ENCODE measurements at regions of chr14 and their contacts with region 1.

Region 1: DNA sequence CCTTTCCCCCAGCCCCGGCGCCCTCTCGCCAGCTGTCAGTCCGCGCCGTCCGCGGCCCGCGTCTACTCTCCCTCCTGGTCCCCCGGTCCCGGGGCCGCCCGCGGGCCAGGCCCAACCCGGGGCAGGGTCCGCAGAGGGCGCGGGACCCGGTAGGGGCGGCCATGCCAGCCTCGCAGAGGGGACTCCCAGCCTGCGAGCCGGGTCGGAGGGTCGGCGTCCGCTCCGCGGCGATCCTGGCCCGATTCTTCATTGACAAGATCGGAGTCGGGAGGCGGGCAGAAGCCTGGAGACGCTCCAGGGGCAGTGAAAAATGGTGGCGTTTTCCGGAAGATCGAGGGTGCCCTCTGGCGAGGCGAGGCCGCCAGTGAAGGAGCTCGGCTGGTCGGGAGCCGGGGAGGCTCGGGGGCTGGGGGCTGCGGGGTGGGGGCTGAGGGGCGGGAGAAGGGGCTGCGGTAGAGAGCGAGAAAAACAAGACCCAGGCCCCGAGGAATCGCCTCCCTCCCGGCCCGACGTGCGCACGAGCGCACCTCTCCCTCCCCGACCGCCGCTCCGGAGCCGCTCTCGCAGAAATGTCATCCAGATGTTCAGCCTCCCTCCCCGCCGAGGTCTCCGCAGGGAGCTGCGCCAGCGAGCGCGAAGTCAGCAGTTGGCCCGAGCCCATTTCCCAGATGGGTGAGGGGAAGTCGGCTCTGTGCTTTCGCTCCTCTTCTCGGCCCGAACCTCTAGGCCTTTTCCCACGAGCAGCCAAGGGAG is 647 bp upstream of the TGFB3 start:
- DNase-seq: peak; percentile 77
- ATAC-seq: peak; percentile 72
- H3K4me3 ChIP-seq: peak overlapping the region; percentile 50
- H3K27ac ChIP-seq: peak overlapping the region; percentile 66
- H3K4me1 ChIP-seq: peaks cover 7% of the 10 kb centered on the region; the same call in 1 of the 2 replicates
- H3K27me3 ChIP-seq: no peaks in the 10 kb centered on the region; the same call in 1 of the 2 replicates
- CTCF ChIP-seq: peak; percentile 72
- POLR2A ChIP-seq: peak; percentile 7; the same call in 1 of the 2 replicates
- RAD21 ChIP-seq: peak; percentile 81

Region 2: DNA sequence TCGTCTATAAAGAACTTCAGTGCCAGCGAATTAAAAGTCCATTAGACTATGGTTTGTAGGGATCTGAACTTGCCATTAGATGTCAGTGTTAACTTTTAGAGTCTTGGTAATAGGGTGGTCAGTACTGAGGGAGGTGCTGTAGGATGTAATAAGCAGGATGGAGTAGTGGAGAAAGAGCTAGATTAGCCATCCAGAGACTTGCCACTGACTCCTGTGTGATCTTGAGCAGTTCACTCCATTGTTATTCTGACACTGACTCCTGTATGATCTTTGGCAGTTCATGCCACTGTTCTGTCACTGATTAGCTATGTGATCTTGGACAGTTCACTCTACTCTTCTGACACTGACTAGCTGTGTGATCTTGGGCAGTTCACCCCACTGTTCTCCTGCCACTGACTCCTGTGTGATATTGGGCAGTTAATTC is 187.8 kb before region 1 on chr14:
- CTCF ChIA-PET with region 1: interaction called, 15 read pairs
- POLR2A ChIA-PET with region 1: no interaction called
- dilution Hi-C with region 1: no loop called
- in situ Hi-C with region 1: loop called (anchors 10 kb)
- intact Hi-C with region 1: loop called (anchors 1 kb)
- DNase-seq: peak; percentile 72
- ATAC-seq: peak; percentile 95
- H3K4me3 ChIP-seq: no peak overlapping the region
- H3K27ac ChIP-seq: no peak overlapping the region
- H3K4me1 ChIP-seq: no peaks in the 10 kb centered on the region
- H3K27me3 ChIP-seq: no peaks in the 10 kb centered on the region
- CTCF ChIP-seq: peak; percentile 65
- POLR2A ChIP-seq: no peak
- RAD21 ChIP-seq: peak; percentile 76

Region 3: DNA sequence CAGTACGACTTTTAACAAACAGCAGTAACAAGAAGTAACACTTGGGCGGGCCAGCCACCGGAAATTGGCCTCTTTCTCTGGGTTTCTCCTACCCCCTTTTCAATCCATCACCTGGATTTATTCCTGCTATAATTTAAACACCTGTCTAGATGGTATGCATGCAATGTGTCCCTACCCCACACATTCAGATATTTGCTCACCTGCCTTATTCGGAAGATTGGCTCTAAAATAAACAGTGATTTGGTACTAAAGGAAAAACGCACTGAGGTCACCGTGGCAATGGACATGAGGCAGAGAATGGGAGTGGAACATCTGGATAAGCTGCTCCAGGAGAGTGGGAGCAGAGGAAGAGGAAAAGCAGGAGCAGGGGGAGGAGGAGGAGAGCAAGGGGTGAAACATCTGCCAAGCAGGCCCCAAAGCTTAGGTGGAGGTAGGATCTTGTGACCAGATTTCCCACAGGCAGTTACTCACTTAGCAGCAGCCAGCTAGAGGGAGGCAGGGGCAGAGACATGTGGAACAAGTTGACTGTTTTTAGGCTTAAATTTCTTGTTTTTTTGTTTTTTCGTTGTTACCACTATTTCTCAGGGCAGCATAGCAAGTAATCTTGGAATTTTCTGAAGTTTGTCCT is 170.5 kb before region 1 on chr14:
- CTCF ChIA-PET with region 1: no interaction called
- POLR2A ChIA-PET with region 1: no interaction called
- dilution Hi-C with region 1: no loop called
- in situ Hi-C with region 1: no loop called
- intact Hi-C with region 1: no loop called
- DNase-seq: no peak
- ATAC-seq: no peak
- H3K4me3 ChIP-seq: no peak overlapping the region
- H3K27ac ChIP-seq: no peak overlapping the region
- H3K4me1 ChIP-seq: no peaks in the 10 kb centered on the region; the same call in 1 of the 2 replicates
- H3K27me3 ChIP-seq: no peaks in the 10 kb centered on the region
- CTCF ChIP-seq: no peak
- POLR2A ChIP-seq: no peak
- RAD21 ChIP-seq: no peak